Activated B cell treated with CpG ODN at 0.5 μM for 24 hours (primary cell): ENCODE measurements at regions of chr4 and their contacts with region 1.

Region 1: DNA sequence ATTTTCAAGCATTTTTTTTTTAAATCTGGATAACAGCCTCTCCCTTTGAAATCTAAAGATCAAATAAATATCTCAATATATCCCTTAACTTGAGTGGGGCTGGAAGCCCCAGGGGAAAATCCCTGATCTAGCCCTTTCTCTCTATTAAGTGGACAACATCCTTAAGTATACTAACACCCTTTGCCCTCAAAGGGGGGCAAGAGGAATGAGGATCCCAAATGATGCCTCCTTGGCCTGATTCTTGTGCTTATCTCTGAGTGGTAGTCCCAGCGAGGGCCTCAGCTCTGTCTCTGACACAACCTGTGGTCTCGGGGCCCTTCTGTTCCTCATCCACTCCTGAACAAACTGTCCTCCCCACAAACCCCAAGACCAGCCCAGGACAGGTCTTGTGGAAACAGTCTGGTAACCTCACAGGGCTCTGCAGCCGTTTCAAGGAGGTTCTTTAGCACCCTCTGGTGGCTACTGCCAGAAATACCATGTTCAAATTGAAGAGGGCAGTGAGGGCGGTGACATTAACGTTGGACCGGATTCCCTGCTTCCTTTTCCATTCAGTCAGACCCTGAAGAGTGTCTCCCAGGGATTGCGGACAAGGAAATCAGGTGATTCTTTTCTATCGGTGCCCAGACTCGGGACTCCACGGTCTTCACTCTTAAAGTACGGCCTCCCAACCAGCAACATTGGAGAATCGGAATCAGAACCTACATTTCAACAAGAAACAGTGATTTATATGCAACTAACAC is 12.9 kb downstream of the CXCL13 start:
- DNase-seq: peak; percentile 19
- ATAC-seq: peak; percentile 81
- H3K4me3 Mint-ChIP-seq: no peak overlapping the region
- H3K27ac Mint-ChIP-seq: no peak overlapping the region
- H3K4me1 Mint-ChIP-seq: peaks cover 3% of the 10 kb centered on the region
- H3K27me3 Mint-ChIP-seq: peaks cover 12% of the 10 kb centered on the region
- CTCF ChIP-seq: peak; percentile 73

Region 2: GRCh38 chr4:77240469-77241066 is 378.0 kb before region 1 on chr4:
- CTCF ChIA-PET with region 1: no interaction called
- POLR2A ChIA-PET with region 1: no interaction called
- intact Hi-C with region 1: loop called (anchors 1 kb)
- DNase-seq: peak; percentile 46
- ATAC-seq: peak; percentile 56
- H3K4me3 Mint-ChIP-seq: no peak overlapping the region
- H3K27ac Mint-ChIP-seq: no peak overlapping the region
- H3K4me1 Mint-ChIP-seq: no peaks in the 10 kb centered on the region
- H3K27me3 Mint-ChIP-seq: no peaks in the 10 kb centered on the region
- CTCF ChIP-seq: no peak

Region 3: DNA sequence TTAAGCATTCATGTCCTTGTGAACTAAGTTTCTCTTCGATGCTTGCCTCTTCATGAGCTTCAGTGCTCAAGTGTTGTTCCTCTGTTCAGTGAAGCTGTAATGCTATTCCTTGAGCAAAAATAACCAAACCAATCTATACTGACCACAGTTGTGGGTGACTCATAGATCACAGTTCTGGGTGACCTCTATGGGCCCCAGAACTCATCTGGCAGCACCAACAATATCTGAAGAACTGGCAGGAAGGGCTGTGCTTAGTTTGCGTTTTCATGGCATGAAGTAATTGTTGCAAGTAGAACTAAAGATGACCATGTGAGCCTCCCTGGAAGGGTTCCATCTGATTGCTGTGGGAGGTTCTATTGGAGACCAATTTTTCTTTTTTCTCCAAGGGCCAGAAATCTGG is 355.3 kb before region 1 on chr4:
- CTCF ChIA-PET with region 1: no interaction called
- POLR2A ChIA-PET with region 1: no interaction called
- intact Hi-C with region 1: no loop called
- DNase-seq: no peak
- ATAC-seq: no peak
- H3K4me3 Mint-ChIP-seq: no peak overlapping the region
- H3K27ac Mint-ChIP-seq: no peak overlapping the region
- H3K4me1 Mint-ChIP-seq: no peaks in the 10 kb centered on the region
- H3K27me3 Mint-ChIP-seq: no peaks in the 10 kb centered on the region
- CTCF ChIP-seq: no peak

Region 4: GRCh38 chr4:77367638-77368037 is 250.9 kb before region 1 on chr4:
- CTCF ChIA-PET with region 1: interaction called, 4 read pairs
- POLR2A ChIA-PET with region 1: interaction called, 3 read pairs
- intact Hi-C with region 1: loop called (anchors 5 kb)
- DNase-seq: no peak
- ATAC-seq: peak; percentile 18
- H3K4me3 Mint-ChIP-seq: no peak overlapping the region
- H3K27ac Mint-ChIP-seq: no peak overlapping the region
- H3K4me1 Mint-ChIP-seq: peaks cover 10% of the 10 kb centered on the region
- H3K27me3 Mint-ChIP-seq: peaks cover 1% of the 10 kb centered on the region
- CTCF ChIP-seq: no peak

Region 5: DNA sequence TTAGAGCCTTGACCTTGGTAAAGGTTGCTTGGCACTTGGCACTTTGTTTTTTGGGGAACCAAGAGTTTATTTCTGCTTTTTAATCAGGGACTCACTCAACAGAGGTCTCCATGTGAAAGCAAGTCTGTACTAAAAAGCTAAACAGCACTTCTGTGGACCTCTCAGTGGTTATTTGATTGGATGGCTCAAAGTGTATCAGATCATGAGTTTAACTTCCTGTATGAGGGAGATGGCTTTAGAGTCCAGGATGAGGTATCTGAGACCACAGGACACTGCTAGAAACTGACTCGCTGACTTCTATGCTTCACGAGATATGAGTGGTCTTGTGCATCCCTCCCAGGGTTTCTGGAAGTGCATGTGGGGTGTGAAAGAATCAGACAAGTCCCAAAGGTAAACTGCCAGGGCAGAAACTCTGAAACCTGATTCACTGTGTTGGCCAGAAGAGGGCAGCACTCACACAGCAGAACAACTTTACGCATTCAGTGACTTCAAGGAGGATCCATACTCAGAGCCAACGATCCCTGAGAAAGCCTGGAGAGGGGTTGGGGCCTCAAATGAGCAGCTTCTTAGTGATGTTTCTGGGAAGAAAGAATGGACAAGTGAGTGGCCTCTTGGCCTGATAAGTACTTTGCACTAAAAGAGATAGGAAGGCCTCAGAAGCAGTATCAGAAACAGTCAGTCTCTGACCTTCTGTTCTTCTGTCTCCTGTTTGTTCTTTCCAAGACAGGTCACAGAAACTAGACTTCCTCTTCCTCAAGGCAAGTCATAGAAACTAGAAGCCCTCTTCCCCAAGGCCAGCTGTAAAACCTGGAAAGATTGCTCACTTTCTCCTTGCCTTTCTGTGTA is 233.2 kb before region 1 on chr4:
- CTCF ChIA-PET with region 1: interaction called, 5 read pairs
- POLR2A ChIA-PET with region 1: no interaction called
- intact Hi-C with region 1: loop called (anchors 1 kb)
- DNase-seq: peak; percentile 36
- ATAC-seq: peak; percentile 47
- H3K4me3 Mint-ChIP-seq: no peak overlapping the region
- H3K27ac Mint-ChIP-seq: no peak overlapping the region
- H3K4me1 Mint-ChIP-seq: no peaks in the 10 kb centered on the region
- H3K27me3 Mint-ChIP-seq: no peaks in the 10 kb centered on the region
- CTCF ChIP-seq: no peak

Region 6: GRCh38 chr4:77465271-77465670 is 153.3 kb before region 1 on chr4:
- CTCF ChIA-PET with region 1: interaction called, 23 read pairs
- POLR2A ChIA-PET with region 1: no interaction called
- intact Hi-C with region 1: loop called (anchors 1 kb)
- DNase-seq: no peak
- ATAC-seq: no peak
- H3K4me3 Mint-ChIP-seq: no peak overlapping the region
- H3K27ac Mint-ChIP-seq: no peak overlapping the region
- H3K4me1 Mint-ChIP-seq: no peaks in the 10 kb centered on the region
- H3K27me3 Mint-ChIP-seq: peaks cover 4% of the 10 kb centered on the region
- CTCF ChIP-seq: no peak

Region 7: DNA sequence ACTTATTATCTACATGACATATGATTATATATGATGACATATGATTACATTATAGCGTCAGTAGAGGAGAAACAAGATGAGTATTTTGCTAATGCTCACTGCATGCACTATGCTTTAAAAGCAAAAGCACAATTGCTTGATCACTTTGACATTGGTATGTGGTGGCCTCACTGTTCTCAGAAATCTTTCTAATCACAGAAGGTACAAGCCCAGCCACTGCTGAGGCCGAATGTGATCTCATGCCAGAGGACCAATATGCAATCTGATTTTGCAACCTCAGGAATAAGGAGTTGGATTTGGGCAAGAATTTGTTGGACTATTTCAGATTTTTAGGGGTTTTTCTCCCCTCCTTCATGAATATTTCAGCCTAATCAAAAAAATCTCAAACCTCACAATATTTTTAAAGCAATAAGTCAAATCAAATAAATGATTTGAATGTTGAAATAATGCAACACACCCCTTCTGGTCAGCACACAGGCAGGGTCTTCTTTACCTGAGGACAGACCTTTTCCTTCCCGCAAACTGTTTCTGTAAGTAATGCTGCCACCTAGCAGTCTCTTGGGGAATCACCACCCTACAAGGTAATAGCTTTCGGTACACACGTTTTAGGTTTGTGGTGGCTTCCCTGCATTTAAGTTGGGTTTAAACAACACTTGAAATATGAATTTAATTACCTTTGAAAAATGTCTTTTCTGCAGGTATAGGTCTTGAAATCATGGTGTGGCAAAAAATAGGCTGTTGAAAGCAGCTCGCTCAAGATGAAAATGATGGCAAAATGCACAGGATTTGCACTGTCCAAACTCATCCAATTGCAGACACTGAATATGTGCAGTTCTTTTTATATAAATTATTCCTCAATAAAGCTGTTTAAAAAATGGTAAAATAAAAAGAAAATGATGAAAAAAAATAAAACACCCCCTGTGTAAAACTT is 17.8 kb before region 1 on chr4:
- CTCF ChIA-PET with region 1: interaction called, 19 read pairs
- POLR2A ChIA-PET with region 1: no interaction called
- intact Hi-C with region 1: loop called (anchors 2 kb)
- DNase-seq: no peak
- ATAC-seq: peak; percentile 47
- H3K4me3 Mint-ChIP-seq: no peak overlapping the region
- H3K27ac Mint-ChIP-seq: no peak overlapping the region
- H3K4me1 Mint-ChIP-seq: no peaks in the 10 kb centered on the region
- H3K27me3 Mint-ChIP-seq: peaks cover 4% of the 10 kb centered on the region
- CTCF ChIP-seq: peak; percentile 53